ENCODE measurements at regions of chr3 and their contacts with region 1.

Region 1: GRCh38 chr3:159486586-159486985 is 502.0 kb upstream of the IL12A start:
- DNase-seq: peak; percentile 65
- ATAC-seq: peak; percentile 91
- H3K4me3 Mint-ChIP-seq: no peak overlapping the region
- H3K27ac Mint-ChIP-seq: no peak overlapping the region
- H3K4me1 Mint-ChIP-seq: peaks cover 24% of the 10 kb centered on the region
- H3K27me3 Mint-ChIP-seq: peaks cover 5% of the 10 kb centered on the region
- CTCF ChIP-seq: 0 out of 2 replicates have a peak, but pooled peaks have one; percentile 30

Region 2: GRCh38 chr3:159472611-159473010 is 14.0 kb before region 1 on chr3:
- CTCF ChIA-PET with region 1: interaction called, 13 read pairs
- POLR2A ChIA-PET with region 1: no interaction called
- DNase-seq: no peak
- ATAC-seq: peak; percentile 72
- H3K4me3 Mint-ChIP-seq: no peak overlapping the region
- H3K27ac Mint-ChIP-seq: no peak overlapping the region
- H3K4me1 Mint-ChIP-seq: peaks cover 4% of the 10 kb centered on the region; the same call in 1 of the 2 replicates
- H3K27me3 Mint-ChIP-seq: no peaks in the 10 kb centered on the region
- CTCF ChIP-seq: no peak

Region 3: DNA sequence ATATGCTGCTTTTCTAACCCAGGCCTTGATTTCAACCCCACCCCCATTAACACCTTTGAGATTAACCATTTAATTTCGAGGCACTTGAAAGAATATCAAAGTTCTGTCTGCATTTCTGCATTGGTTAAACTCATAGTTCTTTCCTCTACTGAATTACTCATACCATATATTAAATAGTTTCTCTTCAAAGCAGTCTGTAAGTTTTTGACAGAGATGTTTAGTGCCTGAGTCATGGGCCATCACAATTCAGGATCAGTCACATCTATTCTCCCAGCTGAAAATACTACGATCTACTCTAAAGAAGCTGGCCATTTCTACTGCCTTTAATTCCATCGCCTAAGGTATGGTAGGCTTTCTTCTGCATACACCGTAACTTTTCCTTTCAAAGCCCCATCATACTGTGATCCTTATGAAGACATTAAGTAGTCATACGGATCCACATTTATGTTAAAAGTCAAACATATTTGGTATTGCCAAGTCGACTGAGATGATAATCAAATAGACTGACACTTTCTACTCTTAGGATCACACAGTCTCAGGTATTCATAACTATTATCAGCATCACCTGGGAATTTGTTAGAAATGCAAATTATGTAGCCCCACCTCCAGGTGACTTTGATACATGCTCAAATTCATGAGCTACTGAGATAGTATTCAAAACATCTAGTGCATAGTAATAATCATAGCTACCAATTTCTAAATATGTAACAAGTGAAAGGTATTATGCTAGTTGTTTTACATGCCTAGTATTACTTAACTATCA is 12.6 kb after region 1 on chr3:
- CTCF ChIA-PET with region 1: interaction called, 10 read pairs
- POLR2A ChIA-PET with region 1: no interaction called
- DNase-seq: no peak
- ATAC-seq: no peak
- H3K4me3 Mint-ChIP-seq: no peak overlapping the region
- H3K27ac Mint-ChIP-seq: no peak overlapping the region
- H3K4me1 Mint-ChIP-seq: no peaks in the 10 kb centered on the region
- H3K27me3 Mint-ChIP-seq: no peaks in the 10 kb centered on the region
- CTCF ChIP-seq: no peak

Region 4: DNA sequence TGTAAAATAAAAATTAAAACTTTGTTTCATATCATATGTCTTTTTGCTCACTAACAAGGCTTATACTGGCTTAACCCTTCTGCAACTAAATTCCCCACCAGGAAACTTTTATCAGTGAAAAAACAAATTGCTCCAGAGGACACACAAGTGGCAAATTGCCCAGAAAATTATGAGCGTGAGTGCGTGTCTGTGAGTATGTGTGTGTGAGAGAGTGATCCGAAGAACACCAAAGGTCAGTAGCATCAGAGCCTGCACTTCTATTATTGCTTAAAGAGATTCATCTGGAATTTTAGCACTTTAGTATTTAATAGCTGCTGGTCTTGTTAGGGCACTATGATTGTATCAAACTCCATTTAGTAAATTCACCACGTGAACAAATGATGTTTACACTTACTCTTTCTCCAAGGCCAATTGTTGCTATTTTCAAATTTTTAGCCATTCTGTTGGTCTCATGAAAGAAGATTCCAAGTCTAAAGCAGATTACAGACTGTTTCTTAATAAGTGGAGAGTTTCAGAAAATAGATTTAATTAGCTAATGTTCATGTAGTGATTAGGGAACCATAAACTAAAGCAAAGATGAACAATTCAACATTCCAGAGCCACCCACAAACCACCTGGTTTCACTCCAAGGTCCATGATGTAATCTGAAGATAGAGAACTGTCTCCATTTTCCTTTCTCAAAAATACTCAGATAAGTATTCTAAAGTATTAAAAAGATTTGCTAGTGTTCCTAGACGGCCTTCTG is 410.9 kb after region 1 on chr3:
- CTCF ChIA-PET with region 1: no interaction called
- POLR2A ChIA-PET with region 1: no interaction called
- DNase-seq: no peak
- ATAC-seq: no peak
- H3K4me3 Mint-ChIP-seq: no peak overlapping the region
- H3K27ac Mint-ChIP-seq: no peak overlapping the region
- H3K4me1 Mint-ChIP-seq: peaks cover 2% of the 10 kb centered on the region; the same call in 1 of the 2 replicates
- H3K27me3 Mint-ChIP-seq: no peaks in the 10 kb centered on the region
- CTCF ChIP-seq: no peak

Measured in WTC11 (cell line).